Activated T-helper 2 cell treated with anti-CD3 and anti-CD28 coated beads, Interferon-gamma antibody, Interleukin-2, Interleukin-4, amounts not matched to agents 10 μg/mL and 5 μg/mL and 100 μg/mL, durations not matched to agents 14 hours and 24 hours and 36 hours (primary cell): ENCODE measurements at regions of chr10 and their contacts with region 1.

Region 1: GRCh38 chr10:91298224-91298871 is 77.9 kb downstream of the PCGF5 start:
- DNase-seq: peak; percentile 69
- H3K4me3 Mint-ChIP-seq: peak overlapping the region; percentile 46
- H3K27ac Mint-ChIP-seq: no peak overlapping the region
- H3K4me1 Mint-ChIP-seq: peaks cover 9% of the 10 kb centered on the region
- H3K27me3 Mint-ChIP-seq: peaks cover 30% of the 10 kb centered on the region

Region 2: DNA sequence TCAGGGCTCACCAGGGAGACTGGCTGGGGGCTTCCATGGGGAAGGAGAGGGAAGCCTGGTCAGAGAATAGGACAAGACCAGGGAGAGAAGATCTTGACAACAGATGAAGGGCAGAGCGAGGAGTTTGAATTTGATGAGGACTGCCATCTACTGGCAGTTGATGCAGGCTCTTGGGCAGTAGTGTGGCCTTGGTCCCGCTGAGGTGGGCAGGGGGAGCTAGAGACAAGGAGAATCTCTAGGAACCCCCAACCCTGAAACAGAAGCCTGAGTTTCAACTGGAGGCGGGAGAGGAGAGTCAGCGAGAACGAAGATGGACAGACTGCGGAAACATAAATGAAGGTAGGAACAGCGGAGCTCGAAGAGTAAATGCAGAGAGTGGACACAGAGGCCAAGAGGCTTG is 253.5 kb after region 1 on chr10:
- intact Hi-C with region 1: loop called (anchors 5 kb)
- DNase-seq: no peak
- H3K4me3 Mint-ChIP-seq: no peak overlapping the region
- H3K27ac Mint-ChIP-seq: no peak overlapping the region
- H3K4me1 Mint-ChIP-seq: no peaks in the 10 kb centered on the region
- H3K27me3 Mint-ChIP-seq: peaks cover 2% of the 10 kb centered on the region

Region 3: DNA sequence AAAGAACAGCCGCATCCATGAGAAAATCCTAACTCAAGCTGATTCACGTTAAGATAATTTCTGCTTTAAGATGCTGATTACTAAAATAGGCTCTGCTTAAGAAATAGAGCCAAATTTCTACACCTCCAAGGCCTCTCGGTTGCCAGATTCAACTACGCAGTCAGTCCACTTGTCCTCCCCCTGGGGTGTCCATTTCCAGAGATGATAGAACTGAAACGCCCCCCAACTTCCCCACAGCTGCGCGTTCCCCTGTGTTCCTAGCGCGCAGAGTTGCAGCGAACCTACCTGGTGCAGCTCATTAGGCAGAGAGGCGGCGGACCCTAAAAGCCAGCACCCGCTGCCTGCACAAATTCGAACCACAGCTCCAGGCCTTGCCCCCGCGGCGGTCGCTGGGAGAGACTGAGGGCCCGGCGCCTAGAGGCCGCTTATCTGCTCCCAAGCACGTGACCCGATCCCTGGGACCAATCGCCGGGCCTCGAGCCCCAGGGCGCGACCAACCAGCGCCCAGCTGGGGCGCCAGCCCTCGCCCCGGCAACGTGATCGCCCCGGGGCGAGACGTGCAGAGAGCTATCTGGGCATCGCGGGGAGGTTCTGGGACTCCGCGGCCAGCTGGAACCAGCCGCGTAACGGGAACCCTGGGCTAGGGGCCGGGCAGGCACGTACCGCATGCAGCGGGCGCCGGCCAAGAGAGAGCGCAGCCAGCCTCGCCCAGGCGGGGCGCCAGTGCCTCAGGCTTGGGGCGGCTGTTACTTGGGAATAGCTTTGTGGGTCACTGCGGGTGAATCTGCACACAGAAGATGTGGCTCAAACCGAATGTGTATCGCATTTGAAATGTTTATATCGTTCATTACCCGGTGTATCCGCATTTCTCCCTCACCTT is 334.6 kb after region 1 on chr10 and contains the start of gene PPP1R3C:
- intact Hi-C with region 1: loop called (anchors 1 kb)
- DNase-seq: peak; percentile 41
- H3K4me3 Mint-ChIP-seq: peak within 1 kb of the TSS; percentile 72
- H3K27ac Mint-ChIP-seq: no peak within 1 kb of the TSS
- H3K4me1 Mint-ChIP-seq: peaks cover 6% of the 10 kb centered on the region
- H3K27me3 Mint-ChIP-seq: peaks cover 55% of the 10 kb centered on the region
- total RNA-seq, gene PPP1R3C: 0.14 and 0.21 TPM in 2 replicates

Region 4: DNA sequence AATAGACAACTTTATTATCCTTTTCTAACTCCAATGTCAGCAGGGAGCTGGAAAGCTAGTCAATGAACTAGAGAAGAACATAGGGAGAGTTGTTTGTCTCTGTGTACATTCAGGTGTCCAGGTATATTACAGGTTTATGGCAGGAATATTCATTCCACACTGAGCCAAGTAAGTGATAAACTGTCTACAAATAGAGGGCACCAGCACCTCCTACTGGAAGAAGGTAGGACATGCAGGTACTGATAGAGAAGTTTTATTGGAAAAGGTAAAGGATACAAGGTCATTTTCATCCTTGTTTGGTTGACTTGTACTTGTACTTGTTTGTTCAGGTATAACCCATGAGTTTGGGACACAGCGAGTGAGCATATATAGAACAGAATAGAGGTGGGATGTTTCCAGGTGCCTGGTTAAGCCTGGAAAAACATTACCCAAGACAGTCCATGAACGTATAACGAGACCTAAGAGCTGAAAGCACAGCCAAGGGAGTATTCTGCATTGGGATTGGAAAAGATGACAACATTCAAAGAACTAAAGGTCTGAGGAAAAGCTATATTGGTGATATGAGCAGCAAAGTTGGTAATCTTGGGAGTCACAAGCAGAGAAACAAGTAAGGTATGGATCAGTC is 395.9 kb after region 1 on chr10:
- intact Hi-C with region 1: loop called (anchors 2 kb)
- DNase-seq: no peak
- H3K4me3 Mint-ChIP-seq: no peak overlapping the region
- H3K27ac Mint-ChIP-seq: no peak overlapping the region
- H3K4me1 Mint-ChIP-seq: peaks cover 5% of the 10 kb centered on the region
- H3K27me3 Mint-ChIP-seq: peaks cover 2% of the 10 kb centered on the region